Activated T-helper 2 cell treated with anti-CD3 and anti-CD28 coated beads, Interferon-gamma antibody, Interleukin-2, Interleukin-4, amounts not matched to agents 10 μg/mL and 5 μg/mL and 100 μg/mL, durations not matched to agents 14 hours and 24 hours and 36 hours (primary cell): ENCODE measurements at regions of chr16 and their contacts with region 1.

Region 1: DNA sequence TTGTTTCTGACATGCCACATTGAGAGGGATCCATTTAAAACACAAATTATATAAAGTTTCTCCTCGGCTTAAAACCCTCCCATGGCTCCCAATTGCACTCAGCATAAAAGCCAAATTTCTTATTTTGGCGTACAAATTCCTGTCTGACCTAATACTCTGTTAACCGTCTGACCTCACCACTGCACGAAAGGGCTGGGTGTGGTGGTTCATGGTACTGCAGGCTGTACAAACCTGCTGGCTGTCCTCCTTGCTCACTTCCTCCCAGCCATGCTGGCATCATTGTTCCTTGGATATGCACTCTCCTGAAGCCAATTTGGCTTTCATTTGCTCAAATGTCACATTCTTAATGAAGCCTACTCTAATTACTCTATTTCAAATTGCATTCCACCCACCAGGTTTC is 301.6 kb upstream of the C16orf82 start:
- DNase-seq: no peak
- H3K4me3 Mint-ChIP-seq: no peak overlapping the region
- H3K27ac Mint-ChIP-seq: no peak overlapping the region
- H3K4me1 Mint-ChIP-seq: peaks cover 3% of the 10 kb centered on the region
- H3K27me3 Mint-ChIP-seq: peaks cover 7% of the 10 kb centered on the region

Region 2: DNA sequence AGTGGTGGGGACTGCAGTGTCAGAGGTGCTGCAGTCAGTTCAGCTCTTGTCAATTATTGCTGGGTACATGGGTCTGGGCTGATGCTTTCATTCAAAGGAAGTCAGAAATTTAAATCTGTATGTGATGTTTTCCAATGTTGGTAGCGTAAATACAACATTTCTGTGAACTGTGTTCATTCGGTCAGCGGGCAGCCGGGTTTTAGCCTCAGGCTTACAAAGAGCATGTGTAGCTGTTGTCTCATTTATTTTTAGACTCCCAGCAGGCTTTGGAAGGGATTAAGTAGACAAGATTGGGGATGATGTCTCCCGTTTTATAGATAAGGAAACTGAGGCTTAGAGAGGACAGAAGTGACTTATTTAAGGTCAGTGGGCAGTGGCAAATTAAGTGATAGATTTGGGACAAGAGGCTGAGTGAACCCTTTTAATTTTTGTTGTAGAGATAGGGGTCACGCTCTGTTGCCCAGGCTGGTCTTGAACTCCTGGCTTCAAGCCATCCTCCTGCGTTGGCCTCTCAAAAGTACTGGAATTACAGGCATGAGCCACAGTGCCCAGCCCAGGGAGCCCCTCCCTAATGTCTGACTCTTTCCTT is 1540.3 kb before region 1 on chr16:
- intact Hi-C with region 1: no loop called
- DNase-seq: no peak
- H3K4me3 Mint-ChIP-seq: no peak overlapping the region
- H3K27ac Mint-ChIP-seq: no peak overlapping the region
- H3K4me1 Mint-ChIP-seq: peaks cover 1% of the 10 kb centered on the region
- H3K27me3 Mint-ChIP-seq: no peaks in the 10 kb centered on the region

Region 3: DNA sequence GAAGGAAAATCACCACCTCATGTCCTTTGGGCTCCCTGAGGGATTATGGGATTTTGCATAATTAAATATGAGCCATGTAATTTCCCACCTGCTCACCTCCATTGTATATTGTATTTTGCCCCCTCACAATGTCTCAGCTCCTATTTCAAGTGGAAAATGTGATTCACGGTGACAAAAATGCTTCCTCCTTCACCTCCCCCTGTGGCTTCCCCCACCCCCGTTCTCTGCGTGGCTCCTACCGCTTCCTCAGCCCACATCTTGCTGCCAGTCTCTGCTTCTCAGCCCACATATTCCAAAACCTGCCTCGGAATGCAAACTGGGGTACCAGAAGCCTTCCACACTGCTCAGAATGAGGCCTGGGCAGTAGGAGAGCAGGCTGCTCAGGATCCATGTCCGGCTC is 92.9 kb before region 1 on chr16:
- intact Hi-C with region 1: loop called (anchors 5 kb)
- DNase-seq: no peak
- H3K4me3 Mint-ChIP-seq: no peak overlapping the region
- H3K27ac Mint-ChIP-seq: peak overlapping the region; percentile 67
- H3K4me1 Mint-ChIP-seq: peaks cover 32% of the 10 kb centered on the region
- H3K27me3 Mint-ChIP-seq: no peaks in the 10 kb centered on the region

Region 4: DNA sequence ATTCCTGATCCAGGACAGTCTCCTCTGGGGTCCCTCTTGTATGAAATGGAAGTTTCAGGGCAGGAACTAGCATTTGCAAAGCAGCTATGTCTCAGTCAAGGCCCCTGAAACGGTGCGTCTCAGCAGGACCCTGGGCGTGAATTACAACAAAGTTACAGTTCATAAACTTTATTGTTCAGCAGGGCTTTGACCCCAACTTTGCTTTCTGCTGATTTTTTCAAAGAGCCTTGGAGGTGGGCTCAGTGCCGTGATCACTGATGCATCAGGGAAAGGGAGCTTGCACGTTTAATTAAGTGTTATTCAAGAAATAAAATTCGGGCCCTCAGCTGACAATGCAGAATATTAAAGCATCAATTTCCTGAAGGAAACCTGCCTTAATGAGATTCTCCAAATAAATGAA is 41.6 kb after region 1 on chr16:
- intact Hi-C with region 1: no loop called
- DNase-seq: no peak
- H3K4me3 Mint-ChIP-seq: no peak overlapping the region
- H3K27ac Mint-ChIP-seq: no peak overlapping the region
- H3K4me1 Mint-ChIP-seq: peaks cover 5% of the 10 kb centered on the region
- H3K27me3 Mint-ChIP-seq: peaks cover 9% of the 10 kb centered on the region